ENCODE measurements at regions of chr3 and their contacts with region 1.

Region 1: GRCh38 chr3:158918008-158918407 is 116.2 kb downstream of the MFSD1 start:
- DNase-seq: no peak
- ATAC-seq: peak in 1 of 4 donors; percentile 61
- H3K4me3 ChIP-seq: no peak overlapping the region
- H3K27ac ChIP-seq: no peak overlapping the region
- H3K4me1 ChIP-seq: no peaks in the 10 kb centered on the region
- H3K27me3 ChIP-seq: no peaks in the 10 kb centered on the region
- CTCF ChIP-seq: peak; percentile 42

Region 2: GRCh38 chr3:159252772-159253384 is 334.9 kb after region 1 on chr3:
- intact Hi-C with region 1: loop called (anchors 5 to 10 kb)
- DNase-seq: no peak
- ATAC-seq: no peak
- H3K4me3 ChIP-seq: no peak overlapping the region
- H3K27ac ChIP-seq: no peak overlapping the region
- H3K4me1 ChIP-seq: no peaks in the 10 kb centered on the region
- H3K27me3 ChIP-seq: no peaks in the 10 kb centered on the region
- CTCF ChIP-seq: peak; percentile 34

Region 3: GRCh38 chr3:159260049-159260662 is 342.1 kb after region 1 on chr3:
- intact Hi-C with region 1: loop called (anchors 5 to 10 kb)
- DNase-seq: no peak
- ATAC-seq: peak in 2 of 4 donors; percentile 50 to 74
- H3K4me3 ChIP-seq: no peak overlapping the region
- H3K27ac ChIP-seq: no peak overlapping the region
- H3K4me1 ChIP-seq: no peaks in the 10 kb centered on the region
- H3K27me3 ChIP-seq: no peaks in the 10 kb centered on the region
- CTCF ChIP-seq: peak; percentile 83

Region 4: DNA sequence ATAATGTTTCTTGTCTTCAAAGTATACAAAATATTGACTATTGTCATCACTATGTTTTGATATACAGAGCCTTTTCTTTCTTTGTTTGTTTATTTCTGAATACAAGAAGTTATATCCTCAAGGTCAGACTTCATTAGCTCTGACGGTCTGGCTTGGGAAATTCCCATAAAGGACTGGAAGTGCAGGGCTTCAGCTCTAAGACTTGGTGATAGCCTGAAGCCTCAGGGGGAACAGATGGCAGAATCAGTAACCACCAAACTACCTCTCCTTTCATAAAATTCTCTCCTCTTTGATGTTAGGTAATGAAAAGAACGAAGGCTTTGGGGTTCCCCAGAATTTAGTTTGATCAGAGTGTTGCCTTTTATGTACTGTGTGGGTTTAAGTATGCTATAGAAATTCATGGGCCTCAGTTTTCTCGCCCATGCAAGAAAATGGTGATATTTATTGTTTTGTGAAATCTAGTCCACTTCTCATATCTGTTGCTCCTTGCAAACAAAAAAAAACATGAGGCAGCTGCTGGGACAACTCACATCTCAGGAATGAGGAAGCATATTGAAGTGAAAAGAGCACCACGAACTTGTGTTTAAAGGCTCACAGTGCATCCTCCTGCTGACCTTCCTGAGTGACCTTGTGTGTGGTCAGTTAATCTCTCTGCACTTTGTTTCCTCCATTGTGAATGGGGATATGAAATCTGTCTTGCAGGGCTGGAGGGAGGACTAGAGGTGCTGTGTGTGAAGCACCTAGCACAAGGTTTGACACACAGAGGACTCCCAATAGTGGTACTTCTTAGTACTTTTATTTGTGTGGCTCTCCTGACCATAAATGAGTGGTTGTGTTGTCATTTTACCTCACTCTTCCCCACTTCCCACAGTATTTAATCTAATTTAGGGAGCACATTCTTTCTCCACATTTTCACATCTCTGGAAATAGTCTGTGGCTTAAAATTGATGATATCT is 500.8 kb after region 1 on chr3:
- intact Hi-C with region 1: loop called in 1 of 2 experiments (anchors 5 kb)
- DNase-seq: no peak
- ATAC-seq: no peak
- H3K4me3 ChIP-seq: no peak overlapping the region
- H3K27ac ChIP-seq: no peak overlapping the region
- H3K4me1 ChIP-seq: no peaks in the 10 kb centered on the region
- H3K27me3 ChIP-seq: no peaks in the 10 kb centered on the region
- CTCF ChIP-seq: no peak